ENCODE measurements at regions of chr7 and their contacts with region 1.

Region 1: GRCh38 chr7:73718905-73719805 is at the start of gene STX1A:
- DNase-seq: peak; percentile 72
- H3K4me3 Mint-ChIP-seq: peak within 1 kb of the TSS; percentile 88
- H3K27ac Mint-ChIP-seq: peak within 1 kb of the TSS; percentile 89
- H3K4me1 Mint-ChIP-seq: peaks cover 34% of the 10 kb centered on the region
- H3K27me3 Mint-ChIP-seq: peaks cover 15% of the 10 kb centered on the region
- total RNA-seq, gene STX1A: 24.9 and 26.7 TPM in 2 replicates

Region 2: DNA sequence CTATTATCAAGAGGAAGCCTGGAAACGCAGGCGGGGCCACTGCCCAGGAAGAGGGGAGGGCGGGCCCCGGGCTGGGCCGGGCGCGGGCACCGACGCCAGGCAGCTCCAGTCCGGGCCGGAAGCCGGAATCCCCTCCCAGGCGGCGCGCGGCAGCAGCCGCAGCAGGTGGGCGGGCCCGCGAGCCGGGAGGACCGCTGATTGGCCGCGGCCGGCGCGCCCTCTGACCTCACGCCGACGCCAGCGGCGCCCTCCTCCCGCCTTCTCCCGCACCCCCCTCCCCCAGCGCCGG is 162.1 kb before region 1 on chr7:
- intact Hi-C with region 1: loop called (anchors 1 kb)
- DNase-seq: peak; percentile 92
- H3K4me3 Mint-ChIP-seq: peak overlapping the region; percentile 94
- H3K27ac Mint-ChIP-seq: peak overlapping the region; percentile 79
- H3K4me1 Mint-ChIP-seq: peaks cover 38% of the 10 kb centered on the region
- H3K27me3 Mint-ChIP-seq: peaks cover 8% of the 10 kb centered on the region

Region 3: GRCh38 chr7:73623798-73624668 is 95.1 kb before region 1 on chr7 and contains the start of gene MLXIPL:
- intact Hi-C with region 1: loop called (anchors 1 kb)
- DNase-seq: peak; percentile 38
- H3K4me3 Mint-ChIP-seq: no peak within 1 kb of the TSS
- H3K27ac Mint-ChIP-seq: no peak within 1 kb of the TSS
- H3K4me1 Mint-ChIP-seq: no peaks in the 10 kb centered on the region
- H3K27me3 Mint-ChIP-seq: peaks cover 49% of the 10 kb centered on the region
- total RNA-seq, gene MLXIPL: not detected in 2 replicates

Region 4: GRCh38 chr7:73667344-73668102 is 51.6 kb before region 1 on chr7 and contains the start of gene VPS37D:
- intact Hi-C with region 1: loop called (anchors 1 kb)
- DNase-seq: peak; percentile 91
- H3K4me3 Mint-ChIP-seq: peak within 1 kb of the TSS; percentile 78
- H3K27ac Mint-ChIP-seq: no peak within 1 kb of the TSS
- H3K4me1 Mint-ChIP-seq: peaks cover 7% of the 10 kb centered on the region
- H3K27me3 Mint-ChIP-seq: peaks cover 36% of the 10 kb centered on the region
- total RNA-seq, gene VPS37D: 0.18 and 0.34 TPM in 2 replicates

Region 5: DNA sequence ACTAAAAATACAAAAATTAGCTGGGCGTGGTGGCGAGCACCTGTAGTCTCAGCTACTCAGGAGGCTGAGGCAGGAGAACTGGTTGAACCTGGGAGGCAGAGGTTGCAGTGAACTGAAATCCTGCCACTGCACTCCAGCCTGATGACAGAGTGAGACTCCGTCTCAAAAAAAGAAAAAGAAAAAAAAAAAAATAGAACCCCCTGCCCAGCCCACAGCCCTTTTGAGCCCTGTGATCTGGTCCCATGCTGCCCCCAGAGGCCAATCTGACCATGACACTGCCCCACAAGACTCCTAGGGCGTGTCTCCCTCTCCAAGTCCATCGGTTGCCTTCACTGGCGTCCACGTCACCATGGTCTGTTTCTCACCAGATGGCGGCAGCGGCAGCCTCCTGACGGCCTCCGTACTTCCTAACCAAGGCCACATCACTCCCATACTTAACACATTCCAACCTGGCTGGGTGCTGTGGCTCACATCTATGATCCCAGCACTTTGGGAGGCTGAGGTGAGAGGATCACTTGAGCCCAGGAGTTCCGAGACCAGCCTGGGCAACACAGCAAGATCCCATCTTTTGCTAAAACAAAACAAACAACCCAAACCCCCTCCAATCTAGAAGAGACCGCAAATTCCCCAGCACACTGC is 17.7 kb before region 1 on chr7:
- intact Hi-C with region 1: loop called (anchors 1 kb)
- DNase-seq: no peak
- H3K4me3 Mint-ChIP-seq: no peak overlapping the region
- H3K27ac Mint-ChIP-seq: no peak overlapping the region
- H3K4me1 Mint-ChIP-seq: peaks cover 3% of the 10 kb centered on the region
- H3K27me3 Mint-ChIP-seq: no peaks in the 10 kb centered on the region

Region 6: DNA sequence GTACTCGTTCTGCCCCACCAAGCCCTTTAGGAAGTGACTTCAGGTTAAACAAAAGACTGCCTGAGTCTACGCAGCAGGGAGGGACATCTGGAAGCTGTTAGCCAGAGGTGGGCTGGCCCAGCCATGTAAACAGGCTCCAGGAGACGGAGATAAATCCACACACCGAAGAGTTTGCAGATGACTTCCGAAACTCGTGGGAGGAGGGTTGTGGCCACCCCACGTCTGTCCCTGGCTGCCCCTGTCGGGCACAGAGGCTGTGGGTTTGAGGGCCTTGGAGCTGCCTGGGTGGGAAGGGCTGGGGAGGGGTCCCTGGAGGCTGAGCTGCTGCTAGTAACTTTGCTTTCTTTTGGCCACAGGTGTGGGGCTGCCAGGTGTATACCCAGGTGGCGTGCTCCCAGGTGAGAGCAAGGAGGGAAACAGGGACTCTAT is 324.4 kb after region 1 on chr7:
- intact Hi-C with region 1: no loop called
- DNase-seq: no peak
- H3K4me3 Mint-ChIP-seq: no peak overlapping the region
- H3K27ac Mint-ChIP-seq: no peak overlapping the region
- H3K4me1 Mint-ChIP-seq: no peaks in the 10 kb centered on the region
- H3K27me3 Mint-ChIP-seq: peaks cover 2% of the 10 kb centered on the region